Naive thymus-derived CD4-positive, alpha-beta T cell (primary cell): ENCODE measurements at regions of chr9 and their contacts with region 1.

Region 1: GRCh38 chr9:104927912-104928740 is at the start of gene ABCA1:
- DNase-seq: peak; percentile 55 to 82 (median 73)
- ATAC-seq: peak; percentile 83
- H3K4me3 ChIP-seq: peak within 1 kb of the TSS; percentile 84
- H3K4me3 Mint-ChIP-seq: peak within 1 kb of the TSS; percentile 88 to 97 (median 96)
- H3K27ac ChIP-seq: peak within 1 kb of the TSS; percentile 70
- H3K27ac Mint-ChIP-seq: peak within 1 kb of the TSS in 8 of 9 donors; percentile 54 to 95 (median 72)
- H3K4me1 ChIP-seq: peaks cover 7 to 9% of the 10 kb centered on the region in 2 donors
- H3K4me1 Mint-ChIP-seq: peaks cover 19 to 41% (median 25%) of the 10 kb centered on the region in 7 donors
- H3K27me3 ChIP-seq: no peaks in the 10 kb centered on the region
- H3K27me3 Mint-ChIP-seq: peaks cover 0 to 51% (median 0%) of the 10 kb centered on the region in 5 donors
- total RNA-seq, gene ABCA1: 0.58 to 19.4 (median 1.1) TPM

Region 2: GRCh38 chr9:104863180-104863883 is 64.8 kb before region 1 on chr9:
- CTCF ChIA-PET with region 1: no interaction called
- POLR2A ChIA-PET with region 1: no interaction called
- intact Hi-C with region 1: loop called in 1 of 2 experiments (anchors 1 kb)
- DNase-seq: peak in 8 of 9 donors; percentile 25 to 69 (median 57)
- ATAC-seq: peak; percentile 80
- H3K4me3 ChIP-seq: no peak overlapping the region
- H3K4me3 Mint-ChIP-seq: no peak overlapping the region
- H3K27ac ChIP-seq: no peak overlapping the region
- H3K27ac Mint-ChIP-seq: peak overlapping the region in 2 of 9 donors; percentile 2 to 62
- H3K4me1 ChIP-seq: no peaks in the 10 kb centered on the region
- H3K4me1 Mint-ChIP-seq: peaks cover 0 to 18% (median 7%) of the 10 kb centered on the region in 7 donors
- H3K27me3 ChIP-seq: no peaks in the 10 kb centered on the region
- H3K27me3 Mint-ChIP-seq: no peaks in the 10 kb centered on the region

Region 3: DNA sequence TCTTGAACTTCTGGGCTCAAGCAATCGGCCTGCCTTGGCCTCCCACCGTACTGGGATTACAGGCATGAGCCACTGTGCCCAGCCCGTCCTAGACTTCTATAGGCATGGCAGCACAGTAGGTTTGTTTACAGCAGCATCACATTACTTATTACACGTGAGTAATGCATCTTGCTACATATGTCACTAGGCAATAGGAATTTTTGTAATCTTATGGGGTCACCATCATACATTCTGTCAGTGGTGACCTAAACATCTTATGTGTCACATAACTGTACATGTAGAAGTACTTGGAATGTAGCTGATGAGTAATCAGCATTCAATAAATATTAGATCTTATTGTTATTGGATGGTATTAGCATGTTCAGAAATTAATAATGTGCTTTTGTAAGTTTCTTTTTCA is 22.7 kb after region 1 on chr9:
- CTCF ChIA-PET with region 1: no interaction called
- POLR2A ChIA-PET with region 1: no interaction called
- intact Hi-C with region 1: no loop called
- DNase-seq: no peak
- ATAC-seq: no peak
- H3K4me3 ChIP-seq: no peak overlapping the region
- H3K4me3 Mint-ChIP-seq: no peak overlapping the region
- H3K27ac ChIP-seq: no peak overlapping the region
- H3K27ac Mint-ChIP-seq: no peak overlapping the region
- H3K4me1 ChIP-seq: no peaks in the 10 kb centered on the region
- H3K4me1 Mint-ChIP-seq: peaks cover 0 to 4% (median 0%) of the 10 kb centered on the region in 7 donors
- H3K27me3 ChIP-seq: no peaks in the 10 kb centered on the region
- H3K27me3 Mint-ChIP-seq: no peaks in the 10 kb centered on the region

Region 4: GRCh38 chr9:104961238-104961637 is 33.1 kb after region 1 on chr9:
- CTCF ChIA-PET with region 1: no interaction called
- POLR2A ChIA-PET with region 1: no interaction called
- intact Hi-C with region 1: loop called in 1 of 2 experiments (anchors 1 kb)
- DNase-seq: peak in 8 of 9 donors; percentile 11 to 57 (median 36)
- ATAC-seq: peak; percentile 98
- H3K4me3 ChIP-seq: no peak overlapping the region
- H3K4me3 Mint-ChIP-seq: peak overlapping the region in 3 of 10 donors; percentile 16 to 29 (median 29)
- H3K27ac ChIP-seq: no peak overlapping the region
- H3K27ac Mint-ChIP-seq: peak overlapping the region in 2 of 9 donors; percentile 18 to 66
- H3K4me1 ChIP-seq: peaks cover 7 to 14% of the 10 kb centered on the region in 2 donors
- H3K4me1 Mint-ChIP-seq: peaks cover 8 to 36% (median 32%) of the 10 kb centered on the region in 7 donors
- H3K27me3 ChIP-seq: no peaks in the 10 kb centered on the region
- H3K27me3 Mint-ChIP-seq: no peaks in the 10 kb centered on the region

Region 5: DNA sequence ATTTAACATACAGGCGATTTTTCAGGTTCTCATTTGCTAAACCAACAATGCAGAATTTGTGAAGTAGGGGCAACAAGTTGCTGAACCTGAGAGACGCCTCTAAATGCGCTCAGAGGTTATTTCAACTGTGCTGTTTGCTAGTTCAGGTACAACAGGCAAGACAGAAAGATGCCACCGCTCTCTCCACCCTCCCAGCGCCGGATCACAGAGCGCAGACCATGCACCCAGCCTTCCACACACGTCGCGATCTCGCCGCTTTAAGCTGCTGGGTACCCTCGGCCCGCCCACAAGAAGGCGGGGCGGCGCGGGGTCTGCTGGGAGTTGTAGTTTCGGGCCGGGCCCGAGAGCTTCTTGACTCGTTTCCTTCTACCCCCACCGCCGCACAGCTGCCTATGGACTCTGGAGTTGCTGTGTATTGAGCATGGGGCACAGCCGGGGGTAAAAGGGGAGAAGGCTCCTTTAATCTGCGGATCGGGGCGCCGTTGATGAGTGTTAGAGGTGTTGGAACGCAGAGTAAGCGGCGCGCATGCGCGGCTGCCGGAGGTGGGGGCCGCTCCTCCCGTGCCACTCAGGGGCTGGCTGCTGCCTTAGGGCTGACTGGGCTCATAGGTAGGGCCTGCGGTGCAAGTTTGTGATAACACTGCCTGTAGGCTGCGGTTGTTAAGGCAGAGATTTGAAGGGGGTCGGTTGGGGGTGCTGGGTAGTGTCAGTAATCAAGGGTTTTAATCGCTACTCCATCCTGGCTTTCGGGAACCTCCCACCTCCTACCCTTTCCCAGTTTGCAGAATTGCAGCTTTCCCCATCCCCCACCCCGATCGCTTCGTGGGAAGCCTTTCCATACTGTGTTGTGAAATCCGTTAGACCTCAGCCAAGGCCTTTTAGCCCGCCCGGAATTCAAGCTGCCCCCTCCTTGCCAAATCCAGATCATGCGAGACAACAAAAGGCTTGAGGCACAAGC is 40.2 kb after region 1 on chr9:
- CTCF ChIA-PET with region 1: no interaction called
- POLR2A ChIA-PET with region 1: no interaction called
- intact Hi-C with region 1: loop called (anchors 1 kb)
- DNase-seq: peak; percentile 80 to 95 (median 91)
- ATAC-seq: peak; percentile 99
- H3K4me3 ChIP-seq: peak overlapping the region; percentile 85
- H3K4me3 Mint-ChIP-seq: peak overlapping the region; percentile 82 to 96 (median 94)
- H3K27ac ChIP-seq: peak overlapping the region; percentile 69
- H3K27ac Mint-ChIP-seq: peak overlapping the region; percentile 64 to 92 (median 86)
- H3K4me1 ChIP-seq: peaks cover 0 to 6% of the 10 kb centered on the region in 2 donors
- H3K4me1 Mint-ChIP-seq: peaks cover 12 to 25% (median 17%) of the 10 kb centered on the region in 7 donors
- H3K27me3 ChIP-seq: peaks cover 0 to 4% of the 10 kb centered on the region in 2 donors
- H3K27me3 Mint-ChIP-seq: peaks cover 0 to 30% (median 0%) of the 10 kb centered on the region in 5 donors

Region 6: DNA sequence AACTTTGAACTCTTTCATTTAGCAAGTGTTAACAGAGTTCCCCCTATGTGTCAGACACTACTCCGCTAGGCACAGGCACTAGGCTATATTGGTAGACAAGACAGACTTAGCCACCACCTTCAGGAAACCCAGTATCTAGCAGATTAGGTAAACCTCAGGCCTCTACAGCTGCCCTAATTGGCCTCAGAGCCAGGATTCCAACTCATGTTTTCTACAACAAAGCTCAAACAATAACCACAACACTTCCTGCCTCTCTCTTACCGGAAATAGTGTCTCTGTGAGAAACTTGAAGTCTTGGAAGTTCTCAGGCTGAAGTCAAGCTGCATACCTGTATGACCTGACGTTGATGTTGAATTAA is 199.7 kb after region 1 on chr9:
- CTCF ChIA-PET with region 1: no interaction called
- POLR2A ChIA-PET with region 1: no interaction called
- intact Hi-C with region 1: loop called (anchors 1 to 2 kb)
- DNase-seq: peak in 8 of 9 donors; percentile 41 to 92 (median 90)
- ATAC-seq: peak; percentile 99
- H3K4me3 ChIP-seq: no peak overlapping the region
- H3K4me3 Mint-ChIP-seq: peak overlapping the region; percentile 35 to 84 (median 74)
- H3K27ac ChIP-seq: no peak overlapping the region
- H3K27ac Mint-ChIP-seq: peak overlapping the region; percentile 42 to 95 (median 78)
- H3K4me1 ChIP-seq: peaks cover 31 to 55% of the 10 kb centered on the region in 2 donors
- H3K4me1 Mint-ChIP-seq: peaks cover 36 to 67% (median 63%) of the 10 kb centered on the region in 7 donors
- H3K27me3 ChIP-seq: no peaks in the 10 kb centered on the region
- H3K27me3 Mint-ChIP-seq: peaks cover 0 to 35% (median 0%) of the 10 kb centered on the region in 5 donors

Region 7: GRCh38 chr9:105157130-105157583 is 229.0 kb after region 1 on chr9:
- CTCF ChIA-PET with region 1: interaction called, 10 read pairs
- POLR2A ChIA-PET with region 1: interaction called, 4 read pairs
- intact Hi-C with region 1: loop called (anchors 1 kb)
- DNase-seq: peak in 7 of 9 donors; percentile 18 to 53 (median 45)
- ATAC-seq: peak; percentile 89
- H3K4me3 ChIP-seq: no peak overlapping the region
- H3K4me3 Mint-ChIP-seq: no peak overlapping the region
- H3K27ac ChIP-seq: no peak overlapping the region
- H3K27ac Mint-ChIP-seq: peak overlapping the region in 1 of 9 donors; percentile 60
- H3K4me1 ChIP-seq: peaks cover 0 to 7% of the 10 kb centered on the region in 2 donors
- H3K4me1 Mint-ChIP-seq: peaks cover 12 to 34% (median 22%) of the 10 kb centered on the region in 7 donors
- H3K27me3 ChIP-seq: no peaks in the 10 kb centered on the region
- H3K27me3 Mint-ChIP-seq: peaks cover 0 to 6% (median 0%) of the 10 kb centered on the region in 5 donors

Region 8: DNA sequence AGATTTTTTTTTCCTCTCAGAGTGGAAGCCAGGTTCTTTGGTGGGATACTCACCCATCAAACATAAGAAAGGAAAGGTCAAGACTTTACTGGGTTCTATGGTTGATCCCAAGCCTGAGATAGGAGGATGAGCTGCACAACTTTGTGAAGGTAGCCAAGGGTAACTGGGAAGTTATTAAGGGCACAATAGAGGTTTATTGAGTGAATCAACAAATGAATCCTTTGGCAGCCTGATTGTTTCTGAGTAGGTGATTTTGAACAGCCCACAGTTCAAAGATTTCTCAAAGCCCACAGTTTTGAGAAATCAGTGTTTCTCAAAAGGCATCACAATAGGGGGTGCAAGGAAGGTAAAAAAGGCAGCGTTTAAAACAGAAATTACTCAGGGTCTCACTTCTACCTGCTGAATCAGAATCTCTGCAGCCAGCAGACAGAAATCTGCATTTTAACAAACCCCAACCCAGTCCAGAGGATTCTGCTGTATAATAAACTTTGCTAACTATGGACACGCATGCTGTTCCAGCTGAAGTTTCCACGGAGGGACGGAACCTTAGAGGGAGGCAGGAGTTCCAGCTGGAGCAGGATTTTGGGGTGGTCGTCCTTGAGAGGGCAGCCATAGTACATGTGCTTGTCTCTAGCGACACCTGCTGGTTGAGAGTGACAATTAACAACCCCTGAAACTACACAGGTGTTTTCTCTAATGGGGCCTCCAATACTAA is 487.0 kb after region 1 on chr9:
- CTCF ChIA-PET with region 1: interaction called, 3 read pairs
- POLR2A ChIA-PET with region 1: interaction called, 3 read pairs
- intact Hi-C with region 1: loop called (anchors 1 to 2 kb)
- DNase-seq: peak; percentile 30 to 75 (median 58)
- ATAC-seq: peak; percentile 86
- H3K4me3 ChIP-seq: no peak overlapping the region
- H3K4me3 Mint-ChIP-seq: no peak overlapping the region
- H3K27ac ChIP-seq: no peak overlapping the region
- H3K27ac Mint-ChIP-seq: no peak overlapping the region
- H3K4me1 ChIP-seq: no peaks in the 10 kb centered on the region
- H3K4me1 Mint-ChIP-seq: peaks cover 0 to 19% (median 0%) of the 10 kb centered on the region in 7 donors
- H3K27me3 ChIP-seq: no peaks in the 10 kb centered on the region
- H3K27me3 Mint-ChIP-seq: peaks cover 29 to 46% (median 38%) of the 10 kb centered on the region in 5 donors